HepG2 (cell line): ENCODE measurements at regions of chr6 and their contacts with region 1.

Region 1: DNA sequence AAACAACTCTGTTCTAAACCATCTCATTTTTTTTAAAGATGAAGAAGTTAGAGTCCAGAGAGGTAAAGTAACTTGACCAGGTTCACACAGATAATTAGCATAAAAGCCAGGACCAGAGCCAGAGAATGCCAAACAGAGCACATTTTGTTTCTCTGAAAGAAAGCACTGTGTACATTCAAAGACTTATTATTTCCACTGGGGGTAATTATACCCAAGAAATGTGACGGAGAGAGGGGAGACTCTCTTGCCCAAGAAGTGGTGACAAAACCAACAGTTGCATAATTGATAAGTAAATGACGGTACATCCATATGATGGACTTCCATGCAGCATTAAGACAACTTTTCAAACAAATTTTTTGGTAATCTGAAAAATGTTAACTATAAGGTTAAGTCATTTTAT is 111.6 kb downstream of the RTN4IP1 start:
- DNase-seq: no peak
- ATAC-seq: no peak
- H3K4me3 ChIP-seq: no peak overlapping the region
- H3K27ac ChIP-seq: no peak overlapping the region
- H3K4me1 ChIP-seq: peaks cover 51% of the 10 kb centered on the region
- H3K27me3 ChIP-seq: no peaks in the 10 kb centered on the region; a peak in 1 of 5 replicates
- CTCF ChIP-seq: no peak
- EP300 ChIP-seq: no peak
- POLR2A ChIP-seq: no peak
- RAD21 ChIP-seq: no peak

Region 2: GRCh38 chr6:106477790-106478189 is 39.9 kb before region 1 on chr6:
- CTCF ChIA-PET with region 1: no interaction called
- POLR2A ChIA-PET with region 1: no interaction called
- in situ Hi-C with region 1: no loop called
- intact Hi-C with region 1: loop called (anchors 1 kb)
- DNase-seq: no peak
- ATAC-seq: no peak
- H3K4me3 ChIP-seq: no peak overlapping the region
- H3K27ac ChIP-seq: no peak overlapping the region
- H3K4me1 ChIP-seq: no peaks in the 10 kb centered on the region
- H3K27me3 ChIP-seq: peaks cover 0 to 1% of the 10 kb centered on the region in 2 experiments; a peak in 1 of 5 replicates
- CTCF ChIP-seq: no peak
- EP300 ChIP-seq: no peak
- POLR2A ChIP-seq: no peak
- RAD21 ChIP-seq: no peak